ENCODE measurements at regions of chr1 and their contacts with region 1.

Region 1: GRCh38 chr1:21937372-21938221 is 487 bp upstream of the HSPG2 start:
- DNase-seq: peak; percentile 75 to 98 (median 80)

Region 2: GRCh38 chr1:21782868-21783678 is 154.5 kb before region 1 on chr1 and contains the start of gene USP48:
- intact Hi-C with region 1: loop called (anchors 5 kb)
- DNase-seq: peak; percentile 95 to 99 (median 98)

Measured in posterior cingulate gyrus (tissue), 11 donors.